ENCODE measurements at regions of chr9 and their contacts with region 1.

Region 1: GRCh38 chr9:96566498-96567207 is 53.0 kb downstream of the CDC14B start:
- DNase-seq: peak; percentile 90

Region 2: DNA sequence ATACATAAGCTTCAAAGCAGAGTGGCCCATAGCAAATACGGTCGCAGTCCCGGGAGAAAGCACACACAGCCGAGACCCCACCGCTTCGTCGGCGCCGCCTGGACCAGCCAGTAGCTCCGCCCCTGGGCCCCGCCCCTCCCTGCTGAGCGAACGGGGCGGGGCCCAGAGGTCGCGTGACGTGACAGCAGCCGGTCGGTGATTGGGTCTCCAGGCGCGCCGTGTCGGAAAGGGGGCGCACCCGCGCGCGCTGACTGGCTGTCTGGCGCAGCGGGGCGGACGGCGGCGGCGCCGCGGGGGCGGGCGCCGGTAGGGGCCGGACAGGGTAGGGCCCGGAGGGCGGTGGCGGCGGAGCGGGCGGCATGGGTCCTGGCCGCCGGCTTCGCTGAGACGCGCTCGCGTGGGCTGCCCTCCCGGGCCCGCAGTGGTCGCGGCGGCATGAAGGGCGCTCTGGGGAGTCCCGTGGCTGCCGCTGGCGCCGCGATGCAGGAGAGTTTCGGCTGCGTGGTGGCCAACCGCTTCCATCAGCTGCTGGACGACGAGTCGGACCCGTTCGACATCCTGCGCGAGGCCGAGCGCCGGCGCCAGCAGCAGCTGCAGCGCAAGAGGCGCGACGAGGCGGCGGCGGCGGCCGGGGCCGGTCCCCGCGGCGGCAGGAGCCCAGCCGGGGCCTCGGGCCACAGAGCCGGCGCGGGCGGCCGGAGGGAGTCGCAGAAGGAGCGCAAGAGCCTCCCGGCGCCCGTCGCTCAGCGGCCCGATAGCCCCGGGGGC is 116.6 kb before region 1 on chr9 and contains the start of gene HABP4:
- intact Hi-C with region 1: loop called (anchors 5 kb)
- DNase-seq: peak; percentile 98
- total RNA-seq, gene HABP4: 29.7 TPM

Region 3: GRCh38 chr9:96505316-96505991 is 61.2 kb before region 1 on chr9:
- intact Hi-C with region 1: loop called (anchors 5 kb)
- DNase-seq: no peak

Region 4: GRCh38 chr9:96619491-96620154 is 53.0 kb after region 1 on chr9 and contains the start of gene CDC14B:
- intact Hi-C with region 1: loop called (anchors 5 kb)
- DNase-seq: peak; percentile 91
- total RNA-seq, gene CDC14B: 25.5 TPM

Region 5: GRCh38 chr9:96654443-96655197 is 88.0 kb after region 1 on chr9:
- intact Hi-C with region 1: loop called (anchors 2 kb)
- DNase-seq: peak; percentile 92

Measured in cardiac septum (tissue), 1 donor.